ENCODE measurements at regions of chr9 and their contacts with region 1.

Region 1: GRCh38 chr9:135117281-135117680 is 29.8 kb downstream of the OLFM1 start:
- DNase-seq: no peak
- H3K4me3 ChIP-seq: no peak overlapping the region
- H3K27ac ChIP-seq: no peak overlapping the region
- H3K27me3 ChIP-seq: no peaks in the 10 kb centered on the region
- CTCF ChIP-seq: no peak

Region 2: DNA sequence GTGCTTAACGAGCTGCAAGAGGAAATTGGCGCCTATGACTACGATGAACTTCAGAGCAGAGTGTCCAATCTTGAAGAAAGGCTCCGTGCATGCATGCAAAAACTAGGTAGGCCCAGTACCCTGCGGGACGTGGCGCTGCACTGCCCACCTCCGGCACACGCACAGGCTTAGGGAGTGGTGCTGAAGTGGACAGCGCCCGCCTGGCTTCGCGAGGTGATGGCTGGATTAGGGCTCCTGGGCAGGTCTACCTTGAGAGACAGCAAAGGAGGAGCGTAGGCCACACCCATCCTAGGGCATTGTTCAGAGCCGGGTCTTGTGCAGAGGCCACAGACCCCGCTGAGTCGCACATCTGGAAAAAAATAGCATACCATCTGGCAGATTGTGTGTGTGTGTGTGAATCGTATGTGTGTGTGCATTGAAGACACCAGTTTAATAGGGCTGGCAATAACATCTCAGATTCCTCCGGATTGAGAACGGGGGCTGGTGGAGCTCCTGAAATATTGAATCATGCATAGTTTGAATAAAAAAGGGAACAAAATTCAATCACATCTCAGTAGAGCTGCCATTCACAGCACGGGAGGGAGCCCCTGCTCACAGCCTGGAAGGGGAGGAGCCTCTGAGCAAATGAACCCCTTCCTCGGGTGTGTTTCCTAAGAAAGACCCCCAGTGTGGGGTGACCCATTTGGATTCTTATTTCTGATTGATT is 18.7 kb before region 1 on chr9:
- CTCF ChIA-PET with region 1: no interaction called
- POLR2A ChIA-PET with region 1: no interaction called
- DNase-seq: no peak
- H3K4me3 ChIP-seq: no peak overlapping the region
- H3K27ac ChIP-seq: no peak overlapping the region
- H3K27me3 ChIP-seq: no peaks in the 10 kb centered on the region
- CTCF ChIP-seq: no peak

Region 3: GRCh38 chr9:135812961-135813360 is 695.7 kb after region 1 on chr9:
- CTCF ChIA-PET with region 1: no interaction called
- POLR2A ChIA-PET with region 1: interaction called, 10 read pairs
- DNase-seq: no peak
- H3K4me3 ChIP-seq: no peak overlapping the region
- H3K27ac ChIP-seq: no peak overlapping the region
- H3K27me3 ChIP-seq: no peaks in the 10 kb centered on the region
- CTCF ChIP-seq: no peak

Measured in AG04450 (cell line).